ENCODE measurements at regions of chr11 and their contacts with region 1.

Region 1: DNA sequence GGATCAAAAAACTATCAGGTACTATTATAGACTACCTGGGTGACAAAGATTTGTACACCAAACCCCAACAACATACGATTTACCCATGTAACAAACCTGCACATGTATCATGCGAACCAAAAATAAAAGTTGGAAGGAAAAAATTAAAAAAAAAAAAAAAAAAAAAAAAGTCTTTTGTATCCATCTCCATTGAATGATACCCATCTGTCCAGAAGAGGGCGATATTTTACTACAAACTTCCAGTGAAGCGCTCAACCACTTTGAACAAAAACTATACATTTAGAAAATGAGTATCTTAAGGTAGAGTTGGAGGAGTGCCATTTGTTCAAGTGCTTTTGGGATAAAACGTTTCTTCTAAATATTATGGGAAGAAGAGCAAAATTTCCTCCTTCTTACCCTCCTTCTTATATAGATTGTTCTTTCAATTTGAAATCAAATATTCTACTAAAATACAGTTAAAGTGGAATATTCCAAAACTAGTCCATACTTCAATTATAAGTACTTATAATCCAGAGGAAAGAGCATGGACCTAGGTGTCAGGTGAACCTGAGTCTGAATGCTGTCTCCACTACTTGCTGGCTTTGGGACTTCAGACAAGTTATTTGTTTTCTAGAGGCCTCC is 23.3 kb downstream of the ARL14EP start:
- DNase-seq: peak; percentile 34 to 59 (median 53)
- H3K4me3 ChIP-seq: no peak overlapping the region
- H3K4me3 Mint-ChIP-seq: no peak overlapping the region
- H3K27ac ChIP-seq: no peak overlapping the region
- H3K27ac Mint-ChIP-seq: no peak overlapping the region
- H3K4me1 ChIP-seq: peaks cover 9 to 27% of the 10 kb centered on the region in 2 donors
- H3K4me1 Mint-ChIP-seq: peaks cover 14% of the 10 kb centered on the region
- H3K27me3 ChIP-seq: no peaks in the 10 kb centered on the region
- H3K27me3 Mint-ChIP-seq: peaks cover 0 to 6% (median 2%) of the 10 kb centered on the region in 3 donors
- CTCF ChIP-seq: peak; percentile 77

Region 2: DNA sequence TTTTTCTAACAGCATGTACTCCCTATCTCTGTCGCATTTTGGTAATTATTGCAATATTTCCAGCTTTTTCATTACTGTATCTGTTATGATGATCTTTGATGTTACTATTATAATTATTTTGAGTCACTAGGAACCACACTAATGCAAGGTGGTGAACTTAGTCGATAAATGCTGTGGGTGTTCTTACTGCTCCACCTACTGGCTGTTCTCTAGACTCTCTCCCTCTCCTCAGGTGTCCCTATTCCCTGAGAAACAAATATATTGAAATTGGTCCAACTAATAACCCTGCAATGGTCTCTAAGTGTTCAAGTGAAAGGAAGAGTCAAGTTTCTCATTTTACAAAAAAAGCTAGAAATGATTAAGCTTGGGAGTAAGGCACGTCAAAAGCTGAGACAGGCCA is 12.8 kb before region 1 on chr11:
- intact Hi-C with region 1: no loop called
- DNase-seq: no peak
- H3K4me3 ChIP-seq: no peak overlapping the region
- H3K4me3 Mint-ChIP-seq: no peak overlapping the region
- H3K27ac ChIP-seq: no peak overlapping the region
- H3K27ac Mint-ChIP-seq: no peak overlapping the region
- H3K4me1 ChIP-seq: no peaks in the 10 kb centered on the region
- H3K4me1 Mint-ChIP-seq: no peaks in the 10 kb centered on the region
- H3K27me3 ChIP-seq: no peaks in the 10 kb centered on the region
- H3K27me3 Mint-ChIP-seq: no peaks in the 10 kb centered on the region
- CTCF ChIP-seq: peak; percentile 37

Region 3: GRCh38 chr11:30488304-30488998 is 142.3 kb after region 1 on chr11:
- intact Hi-C with region 1: loop called in 1 of 2 experiments (anchors 10 kb)
- DNase-seq: peak in 1 of 3 donors; percentile 6
- H3K4me3 ChIP-seq: no peak overlapping the region
- H3K4me3 Mint-ChIP-seq: no peak overlapping the region
- H3K27ac ChIP-seq: peak overlapping the region in 1 of 2 donors; percentile 84
- H3K27ac Mint-ChIP-seq: peak overlapping the region in 6 of 7 donors; percentile 7 to 84 (median 56)
- H3K4me1 ChIP-seq: peaks cover 42 to 56% of the 10 kb centered on the region in 2 donors
- H3K4me1 Mint-ChIP-seq: peaks cover 50% of the 10 kb centered on the region
- H3K27me3 ChIP-seq: no peaks in the 10 kb centered on the region
- H3K27me3 Mint-ChIP-seq: peaks cover 0 to 2% (median 2%) of the 10 kb centered on the region in 3 donors
- CTCF ChIP-seq: no peak